ENCODE measurements at regions of chr9 and their contacts with region 1.

Region 1: DNA sequence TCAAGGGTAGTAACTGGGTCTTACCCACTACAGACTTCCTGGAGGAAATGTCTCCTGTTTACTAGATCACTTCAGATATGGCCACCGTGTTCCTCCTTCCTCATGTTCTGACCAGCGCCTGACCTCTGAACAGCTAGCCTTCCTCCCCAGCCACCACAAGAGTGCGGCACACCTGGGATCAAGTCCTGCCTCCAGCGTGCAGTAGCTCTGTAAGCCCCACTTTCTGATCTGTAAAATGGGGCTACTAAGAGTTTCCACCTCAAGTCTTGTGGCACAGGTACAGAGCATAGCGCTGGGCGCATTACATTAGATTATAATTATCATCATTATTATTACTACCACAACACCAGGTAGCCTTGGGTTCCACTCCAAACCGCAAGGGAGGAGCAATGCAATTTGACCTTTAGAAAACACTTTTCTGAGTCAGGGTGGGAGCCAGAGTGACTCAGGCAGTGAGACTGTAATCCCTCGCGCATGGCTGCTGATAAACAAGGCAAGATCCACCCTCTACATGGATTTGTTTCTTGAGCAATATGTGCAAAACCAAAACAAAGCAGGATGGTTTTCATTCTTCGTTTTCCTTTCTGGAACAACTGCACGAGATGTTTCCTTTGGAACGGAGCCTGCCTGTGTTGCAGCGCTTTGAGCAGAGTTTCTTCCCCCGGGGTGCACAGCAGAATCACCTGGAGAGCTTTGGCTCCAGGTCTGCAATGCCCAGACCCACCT is 65.0 kb upstream of the ANGPTL2 start:
- DNase-seq: peak in 1 of 2 donors; percentile 61
- ATAC-seq: peak; percentile 27 to 65 (median 38)
- H3K4me3 ChIP-seq: no peak overlapping the region
- H3K27ac ChIP-seq: peak overlapping the region; percentile 77 to 97 (median 88)
- H3K4me1 ChIP-seq: peaks cover 26 to 63% (median 54%) of the 10 kb centered on the region in 9 donors
- H3K27me3 ChIP-seq: no peaks in the 10 kb centered on the region
- CTCF ChIP-seq: no peak

Region 2: DNA sequence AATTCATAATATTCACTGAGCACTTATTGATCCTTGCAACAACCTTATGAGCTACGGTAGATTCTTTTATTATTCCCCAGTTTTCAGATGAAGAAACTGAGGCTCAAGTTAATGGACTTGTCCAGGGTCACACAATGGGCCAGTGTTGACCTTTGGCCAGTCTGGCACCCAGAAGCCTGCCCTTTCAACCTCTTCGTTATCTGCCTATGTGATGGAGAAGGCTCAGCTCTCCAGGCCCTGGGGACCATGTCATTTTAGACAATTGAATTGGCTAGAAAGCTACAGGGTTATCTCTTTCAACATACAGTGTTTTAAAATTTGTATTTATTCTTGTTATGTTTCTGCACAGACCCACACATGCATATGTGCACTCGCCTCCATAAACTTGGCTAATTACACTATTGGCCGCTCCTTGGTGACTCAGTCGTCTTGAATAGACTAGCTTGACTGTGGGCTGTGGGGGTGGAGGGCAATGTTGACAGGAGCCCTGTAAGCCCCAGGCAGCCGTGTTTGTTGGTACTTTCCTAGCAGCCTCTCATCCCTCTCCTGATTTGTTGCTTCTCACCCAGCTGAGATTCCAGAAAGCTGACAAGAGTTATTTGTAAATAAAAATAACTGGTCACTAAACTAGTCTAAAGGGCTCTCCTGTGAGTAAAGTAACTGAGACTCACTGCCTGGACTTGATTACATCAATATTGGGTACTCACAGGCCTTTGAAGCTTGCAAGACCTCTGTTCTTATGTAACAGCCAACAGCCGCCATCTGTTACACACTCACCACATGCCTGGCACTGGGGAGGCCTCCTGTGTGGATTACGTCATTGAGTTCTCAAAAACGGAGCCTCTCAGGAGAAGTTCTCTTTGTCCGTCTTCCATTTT is 56.5 kb before region 1 on chr9:
- intact Hi-C with region 1: loop called in 3 of 10 experiments (anchors 2 to 5 kb)
- DNase-seq: peak in 1 of 2 donors; percentile 70
- ATAC-seq: peak in 7 of 8 donors; percentile 8 to 53 (median 24)
- H3K4me3 ChIP-seq: no peak overlapping the region
- H3K27ac ChIP-seq: peak overlapping the region in 9 of 10 donors; percentile 5 to 95 (median 71)
- H3K4me1 ChIP-seq: peaks cover 31 to 84% (median 66%) of the 10 kb centered on the region in 9 donors
- H3K27me3 ChIP-seq: no peaks in the 10 kb centered on the region
- CTCF ChIP-seq: no peak

Region 3: GRCh38 chr9:127140842-127141675 is 46.3 kb before region 1 on chr9:
- intact Hi-C with region 1: no loop called
- DNase-seq: no peak
- ATAC-seq: peak in 2 of 8 donors; percentile 21 to 34
- H3K4me3 ChIP-seq: no peak overlapping the region
- H3K27ac ChIP-seq: no peak overlapping the region
- H3K4me1 ChIP-seq: peaks cover 0 to 38% (median 11%) of the 10 kb centered on the region in 9 donors
- H3K27me3 ChIP-seq: no peaks in the 10 kb centered on the region
- CTCF ChIP-seq: no peak